Gastrocnemius medialis (tissue), 4 donors: ENCODE measurements at regions of chr4 and their contacts with region 1.

Region 1: GRCh38 chr4:88514557-88515511 is 8.7 kb downstream of the PYURF start:
- DNase-seq: no peak
- ATAC-seq: no peak
- H3K4me3 ChIP-seq: no peak overlapping the region
- H3K27ac ChIP-seq: no peak overlapping the region
- H3K4me1 ChIP-seq: no peaks in the 10 kb centered on the region
- H3K27me3 ChIP-seq: no peaks in the 10 kb centered on the region
- CTCF ChIP-seq: no peak
- POLR2A ChIP-seq: no peak

Region 2: DNA sequence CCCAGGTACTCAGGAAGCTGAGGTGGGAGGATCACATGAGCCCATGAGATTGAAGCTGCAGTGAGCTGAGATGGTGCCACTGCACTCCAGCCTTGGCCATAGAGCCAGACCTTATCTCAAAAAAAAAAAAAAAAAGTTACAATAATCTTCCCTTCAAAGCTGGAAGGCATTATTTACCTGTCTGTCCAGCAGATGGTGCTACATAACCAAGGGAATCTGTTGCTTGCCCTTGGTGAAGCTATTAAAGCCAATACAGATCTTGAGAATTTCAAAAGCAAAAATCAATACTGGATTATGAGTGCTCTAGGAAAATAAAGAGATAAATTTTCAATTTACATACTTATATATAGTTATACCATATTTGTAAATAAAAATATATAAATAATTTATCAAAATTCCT is 481.5 kb before region 1 on chr4:
- in situ Hi-C with region 1: loop called (anchors 10 to 25 kb)
- intact Hi-C with region 1: loop called (anchors 10 kb)
- DNase-seq: no peak
- ATAC-seq: peak in 1 of 2 donors; percentile 64
- H3K4me3 ChIP-seq: no peak overlapping the region
- H3K27ac ChIP-seq: no peak overlapping the region
- H3K4me1 ChIP-seq: no peaks in the 10 kb centered on the region
- H3K27me3 ChIP-seq: no peaks in the 10 kb centered on the region
- CTCF ChIP-seq: peak in 4 of 5 experiments; percentile 24 to 70 (median 56)
- POLR2A ChIP-seq: no peak

Region 3: GRCh38 chr4:88225232-88226105 is 289.4 kb before region 1 on chr4:
- in situ Hi-C with region 1: loop called in 2 of 4 experiments (anchors 5 kb)
- intact Hi-C with region 1: no loop called
- DNase-seq: no peak
- ATAC-seq: no peak
- H3K4me3 ChIP-seq: no peak overlapping the region
- H3K27ac ChIP-seq: no peak overlapping the region
- H3K4me1 ChIP-seq: peaks cover under 1 to 2% of the 10 kb centered on the region in 2 donors
- H3K27me3 ChIP-seq: no peaks in the 10 kb centered on the region
- CTCF ChIP-seq: no peak
- POLR2A ChIP-seq: no peak

Region 4: DNA sequence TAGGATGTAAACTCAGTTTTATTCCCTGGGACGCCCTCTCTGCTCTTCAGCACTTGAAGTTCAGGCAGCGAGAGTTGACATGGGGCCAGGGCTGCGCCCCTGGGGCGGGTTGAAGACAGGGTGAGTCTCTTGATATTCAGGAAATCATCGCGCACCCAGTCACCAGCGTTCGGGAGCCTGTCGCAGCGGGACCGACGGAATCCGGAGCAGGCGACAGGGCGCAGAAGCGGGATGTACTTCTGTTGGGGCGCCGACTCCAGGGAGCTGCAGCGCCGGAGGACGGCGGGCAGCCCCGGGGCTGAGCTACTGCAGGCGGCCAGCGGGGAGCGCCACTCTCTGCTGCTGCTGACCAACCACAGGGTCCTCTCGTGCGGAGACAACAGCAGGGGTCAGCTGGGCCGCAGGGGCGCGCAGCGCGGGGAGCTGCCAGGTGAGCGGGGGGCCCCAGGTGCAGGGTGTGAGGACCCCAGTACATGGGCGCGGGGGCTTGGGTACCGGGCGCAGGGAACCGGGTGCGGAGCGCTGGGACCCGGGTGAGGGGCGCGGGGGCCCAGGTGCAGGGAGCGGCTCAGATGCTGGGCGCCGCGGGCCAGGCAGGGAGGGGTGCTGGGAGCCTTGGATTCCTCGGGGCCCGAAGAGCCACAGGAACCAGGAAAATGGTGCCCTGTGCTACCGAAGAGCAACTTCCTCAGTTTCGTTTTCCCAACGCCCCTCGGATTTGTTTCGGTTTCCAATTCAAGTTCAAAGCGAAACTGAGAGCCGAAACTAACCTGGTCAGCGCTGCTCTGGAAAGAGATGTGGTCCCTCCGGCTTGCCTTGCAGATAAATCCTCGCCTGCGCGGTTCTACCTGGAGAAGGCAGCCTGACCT is 135.9 kb before region 1 on chr4 and contains the start of gene HERC6:
- in situ Hi-C with region 1: loop called in 1 of 4 experiments (anchors 10 kb)
- intact Hi-C with region 1: loop called (anchors 5 kb)
- DNase-seq: peak; percentile 25 to 59
- ATAC-seq: peak; percentile 90 to 92
- H3K4me3 ChIP-seq: peak within 1 kb of the TSS; percentile 81 to 99 (median 96)
- H3K27ac ChIP-seq: peak within 1 kb of the TSS; percentile 71 to 88 (median 81)
- H3K4me1 ChIP-seq: no peaks in the 10 kb centered on the region
- H3K27me3 ChIP-seq: no peaks in the 10 kb centered on the region
- CTCF ChIP-seq: peak; percentile 47 to 77 (median 60)
- POLR2A ChIP-seq: no peak
- total RNA-seq, gene HERC6: 0.42 to 1.6 (median 1.0) TPM

Region 5: GRCh38 chr4:89598602-89599001 is 1083.8 kb after region 1 on chr4:
- in situ Hi-C with region 1: no loop called
- intact Hi-C with region 1: no loop called
- DNase-seq: no peak
- ATAC-seq: no peak
- H3K4me3 ChIP-seq: no peak overlapping the region
- H3K27ac ChIP-seq: no peak overlapping the region
- H3K4me1 ChIP-seq: no peaks in the 10 kb centered on the region
- H3K27me3 ChIP-seq: no peaks in the 10 kb centered on the region
- CTCF ChIP-seq: no peak
- POLR2A ChIP-seq: no peak

Region 6: GRCh38 chr4:89800012-89800516 is 1285.2 kb after region 1 on chr4:
- in situ Hi-C with region 1: no loop called
- intact Hi-C with region 1: no loop called
- DNase-seq: no peak
- ATAC-seq: no peak
- H3K4me3 ChIP-seq: no peak overlapping the region
- H3K27ac ChIP-seq: no peak overlapping the region
- H3K4me1 ChIP-seq: no peaks in the 10 kb centered on the region
- H3K27me3 ChIP-seq: no peaks in the 10 kb centered on the region
- CTCF ChIP-seq: no peak
- POLR2A ChIP-seq: no peak